Aorta (tissue), 5 donors: ENCODE measurements at regions of chr12 and their contacts with region 1.

Region 1: DNA sequence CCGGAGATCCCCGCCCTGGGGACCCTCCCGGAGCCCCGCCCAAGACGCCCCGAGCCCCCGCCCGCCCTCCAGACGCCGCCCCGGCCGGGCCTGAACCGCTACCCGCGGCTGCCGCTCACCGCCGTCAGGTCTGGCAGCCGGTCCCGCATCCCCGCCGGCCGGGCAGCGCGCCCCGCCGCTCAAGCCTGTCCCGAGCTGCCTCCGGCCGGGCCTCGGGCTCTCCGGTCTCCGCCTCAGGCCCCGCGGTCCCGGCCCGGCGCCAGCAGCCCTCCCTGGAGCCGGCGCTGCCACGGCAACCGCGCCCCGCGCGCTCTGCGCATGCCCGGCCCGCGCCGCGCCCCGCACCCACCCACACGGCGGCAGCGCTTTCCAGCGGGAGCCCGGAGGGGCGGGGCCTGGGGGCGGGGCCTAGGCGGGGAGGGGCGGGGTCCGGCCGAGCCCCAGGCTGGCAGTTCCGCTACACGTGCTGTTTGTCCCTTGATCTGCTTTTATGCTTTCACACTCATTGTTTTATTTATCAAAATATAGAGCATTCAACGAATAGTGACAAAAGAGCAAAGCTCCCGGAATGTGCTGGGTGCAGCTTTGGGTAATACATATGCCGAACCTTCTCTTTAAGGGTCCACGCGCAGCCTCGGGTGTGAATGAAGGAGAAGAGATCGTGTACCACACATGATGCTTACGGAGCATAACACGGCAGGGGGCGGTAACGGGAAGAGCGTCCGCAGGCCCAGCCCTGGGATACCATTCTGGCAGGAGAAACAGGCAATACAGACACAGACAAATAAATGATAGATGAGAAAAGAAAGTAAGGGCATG is at the start of gene STX2:
- DNase-seq: peak; percentile 90 to 97
- ATAC-seq: peak; percentile 97
- H3K4me3 ChIP-seq: peak within 1 kb of the TSS; percentile 95 to 99
- H3K27ac ChIP-seq: no peak within 1 kb of the TSS
- H3K4me1 ChIP-seq: no peaks in the 10 kb centered on the region
- H3K27me3 ChIP-seq: no peaks in the 10 kb centered on the region
- total RNA-seq, gene STX2: 30.4 to 31.5 TPM

Region 2: GRCh38 chr12:130871286-130872178 is 32.4 kb after region 1 on chr12 and contains the start of gene RAN:
- intact Hi-C with region 1: loop called in 1 of 2 experiments (anchors 2 kb)
- DNase-seq: peak; percentile 95 to 97
- ATAC-seq: peak; percentile 96
- H3K4me3 ChIP-seq: peak within 1 kb of the TSS; percentile 54 to 98
- H3K27ac ChIP-seq: peak within 1 kb of the TSS in 1 of 2 donors; percentile 23
- H3K4me1 ChIP-seq: peaks cover 0 to 3% of the 10 kb centered on the region in 2 donors
- H3K27me3 ChIP-seq: no peaks in the 10 kb centered on the region
- total RNA-seq, gene RAN: 233 to 304 TPM